Endothelial cell of umbilical vein (primary cell): ENCODE measurements at regions of chr9 and their contacts with region 1.

Region 1: DNA sequence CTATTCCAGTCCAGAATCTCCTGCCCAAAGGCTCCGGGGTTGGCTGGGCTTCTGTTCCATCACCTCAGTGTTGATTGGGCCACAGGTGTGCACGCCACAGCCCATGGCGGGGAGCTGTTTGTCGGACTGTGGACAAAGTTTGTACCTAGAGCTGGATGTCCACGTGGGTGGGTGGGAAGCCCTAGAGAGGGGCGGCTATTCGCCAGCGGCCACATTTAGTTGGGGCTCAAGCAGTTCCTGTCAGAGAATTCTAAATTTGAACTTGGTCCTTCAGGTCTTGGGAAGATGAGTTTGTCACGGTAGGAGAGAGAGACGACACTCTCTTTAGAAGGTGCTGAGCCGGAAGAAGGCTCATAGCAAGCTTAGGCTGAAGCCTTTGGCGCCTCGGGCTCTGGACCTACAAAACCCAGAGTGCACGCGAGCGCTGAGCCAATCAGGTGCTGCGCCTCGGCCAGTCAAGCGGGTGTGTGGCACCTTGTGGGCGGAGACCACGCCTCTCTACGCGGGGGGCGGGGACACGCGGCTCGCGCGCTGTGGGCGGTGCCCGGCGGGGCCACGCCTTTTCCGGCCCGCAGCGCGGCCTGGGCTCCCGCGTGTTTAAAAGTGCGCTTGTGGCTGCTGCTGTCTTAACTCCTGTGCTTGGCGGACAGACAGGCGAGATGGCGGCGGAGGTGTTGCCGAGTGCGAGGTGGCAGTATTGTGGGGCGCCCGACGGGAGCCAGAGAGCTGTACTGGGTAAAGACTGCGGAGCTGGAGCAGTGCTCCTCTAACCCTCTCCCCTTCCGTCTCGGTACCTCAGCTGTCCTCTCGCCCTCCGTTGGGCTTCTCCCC is at the start of gene POLR1E:
- DNase-seq: peak; percentile 92
- H3K4me3 ChIP-seq: peak within 1 kb of the TSS; percentile 46 to 78 (median 76)
- H3K27ac ChIP-seq: peak within 1 kb of the TSS; percentile 36
- H3K4me1 ChIP-seq: peaks cover 16% of the 10 kb centered on the region
- H3K27me3 ChIP-seq: peaks cover 3 to 6% of the 10 kb centered on the region in 2 experiments
- CTCF ChIP-seq: no peak
- POLR2A ChIP-seq: peak; percentile 94
- total RNA-seq, gene POLR1E: 17.2 and 21.2 TPM in 2 replicates

Region 2: GRCh38 chr9:37293664-37294524 is 191.7 kb before region 1 on chr9:
- CTCF ChIA-PET with region 1: no interaction called
- POLR2A ChIA-PET with region 1: no interaction called
- dilution Hi-C with region 1: no loop called
- intact Hi-C with region 1: no loop called
- DNase-seq: peak; percentile 43
- H3K4me3 ChIP-seq: no peak overlapping the region
- H3K27ac ChIP-seq: no peak overlapping the region
- H3K4me1 ChIP-seq: peaks cover 26% of the 10 kb centered on the region
- H3K27me3 ChIP-seq: no peaks in the 10 kb centered on the region
- CTCF ChIP-seq: no peak
- POLR2A ChIP-seq: no peak

Region 3: DNA sequence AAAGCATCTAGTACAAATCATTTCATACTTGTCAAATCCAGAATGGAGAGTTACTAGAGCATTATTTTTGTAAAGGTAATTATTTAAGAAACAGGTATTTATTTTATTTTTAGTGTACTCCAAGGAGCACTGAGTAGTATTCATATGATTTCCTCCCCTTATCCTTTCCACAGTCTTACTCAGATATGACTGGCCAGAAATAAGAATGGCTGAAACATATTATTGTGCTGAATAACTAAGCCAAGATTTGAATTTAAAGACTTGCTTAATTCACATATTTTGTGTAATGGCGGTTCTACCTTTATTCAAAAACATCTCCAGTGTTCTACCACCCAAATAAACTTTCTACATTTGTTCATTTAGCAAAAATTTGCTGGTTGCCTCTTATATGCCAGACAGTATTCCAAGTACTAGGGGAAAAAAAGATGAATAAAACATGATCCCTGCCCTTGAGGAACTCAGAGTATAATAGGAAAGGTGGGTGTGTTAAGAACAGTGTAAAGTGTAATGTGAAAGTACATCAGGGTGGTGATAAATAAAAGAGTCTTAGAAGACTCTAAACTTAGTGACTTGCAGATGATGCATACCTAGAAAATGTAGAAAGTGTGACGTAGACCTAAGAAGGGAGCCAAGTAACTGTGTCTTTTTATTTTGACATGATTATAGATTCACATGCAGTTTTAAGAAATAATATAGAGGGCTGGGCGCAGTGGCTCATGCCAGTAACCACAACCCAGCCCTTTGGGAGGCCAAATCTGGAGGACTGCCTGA is 173.5 kb before region 1 on chr9:
- CTCF ChIA-PET with region 1: no interaction called
- POLR2A ChIA-PET with region 1: no interaction called
- dilution Hi-C with region 1: no loop called
- intact Hi-C with region 1: no loop called
- DNase-seq: no peak
- H3K4me3 ChIP-seq: no peak overlapping the region
- H3K27ac ChIP-seq: no peak overlapping the region
- H3K4me1 ChIP-seq: no peaks in the 10 kb centered on the region
- H3K27me3 ChIP-seq: no peaks in the 10 kb centered on the region
- CTCF ChIP-seq: no peak
- POLR2A ChIP-seq: no peak

Region 4: DNA sequence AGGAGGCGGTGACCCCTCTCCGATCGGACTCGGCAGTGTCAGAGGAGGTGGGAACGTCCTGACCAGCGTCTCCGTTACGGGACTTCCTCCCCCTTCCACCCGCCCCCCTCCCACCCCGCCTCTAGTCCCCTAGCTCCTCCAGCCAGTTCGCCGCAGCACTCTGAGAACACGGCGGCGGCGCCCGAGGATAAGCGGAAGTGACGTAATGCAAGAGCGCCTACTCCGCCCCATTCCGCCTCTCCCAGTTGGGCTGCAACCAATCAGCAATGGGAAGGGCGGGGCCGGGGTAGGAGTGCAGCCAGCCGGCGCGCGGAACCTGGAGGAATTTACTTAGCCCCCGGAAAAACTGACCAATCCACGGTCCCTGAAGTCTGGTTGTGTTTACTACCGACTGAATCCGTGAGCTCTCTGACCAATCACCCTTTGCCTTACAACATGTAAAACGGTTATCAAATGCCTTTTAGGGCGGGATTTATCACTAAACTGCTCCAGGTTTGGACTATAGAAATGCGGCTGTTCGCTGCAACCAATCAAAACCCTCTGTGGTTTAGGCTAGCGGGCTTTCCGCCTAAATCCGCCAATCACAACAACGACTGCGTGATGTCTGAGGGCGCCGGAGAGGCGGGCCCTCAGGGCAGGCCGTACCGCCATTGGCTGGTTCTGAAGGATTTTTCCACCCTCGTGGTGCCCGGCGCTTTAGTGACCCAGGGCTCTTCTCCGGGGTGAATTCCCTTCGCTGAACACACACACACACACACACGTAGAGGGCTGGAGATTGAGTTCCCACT is 20.2 kb before region 1 on chr9 and contains the start of gene ZBTB5:
- CTCF ChIA-PET with region 1: interaction called, 4 read pairs
- POLR2A ChIA-PET with region 1: interaction called, 9 read pairs
- dilution Hi-C with region 1: no loop called
- intact Hi-C with region 1: loop called (anchors 1 kb)
- DNase-seq: peak; percentile 100
- H3K4me3 ChIP-seq: peak within 1 kb of the TSS; percentile 45 to 97 (median 84)
- H3K27ac ChIP-seq: peak within 1 kb of the TSS; percentile 94
- H3K4me1 ChIP-seq: peaks cover 17% of the 10 kb centered on the region
- H3K27me3 ChIP-seq: no peaks in the 10 kb centered on the region
- CTCF ChIP-seq: no peak
- POLR2A ChIP-seq: no peak
- total RNA-seq, gene ZBTB5: 9.6 and 10.0 TPM in 2 replicates

Region 5: DNA sequence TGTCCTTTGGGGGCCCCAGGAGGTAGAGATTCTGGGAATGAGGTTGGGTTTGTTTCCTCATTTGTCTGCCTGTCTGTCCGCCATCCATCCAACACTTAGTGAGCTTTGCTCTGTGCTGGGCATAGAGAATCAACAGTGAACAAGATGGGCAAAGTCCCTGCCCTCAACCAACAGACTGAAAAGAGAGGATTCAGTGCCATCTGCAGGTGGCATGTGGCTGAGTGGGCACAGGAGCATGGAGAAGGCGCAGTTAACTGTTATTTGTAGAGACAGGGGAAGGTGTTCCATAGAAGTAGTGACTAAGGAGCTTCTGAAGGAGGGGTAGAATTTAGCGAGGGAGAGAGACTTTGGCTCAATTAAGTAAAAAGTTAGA is 23.2 kb after region 1 on chr9:
- CTCF ChIA-PET with region 1: interaction called, 12 read pairs
- POLR2A ChIA-PET with region 1: no interaction called
- dilution Hi-C with region 1: no loop called
- intact Hi-C with region 1: no loop called
- DNase-seq: no peak
- H3K4me3 ChIP-seq: no peak overlapping the region
- H3K27ac ChIP-seq: no peak overlapping the region
- H3K4me1 ChIP-seq: no peaks in the 10 kb centered on the region
- H3K27me3 ChIP-seq: no peaks in the 10 kb centered on the region
- CTCF ChIP-seq: no peak
- POLR2A ChIP-seq: no peak

Region 6: GRCh38 chr9:37582548-37583157 is 97.0 kb after region 1 on chr9:
- CTCF ChIA-PET with region 1: interaction called, 8 read pairs
- POLR2A ChIA-PET with region 1: no interaction called
- dilution Hi-C with region 1: no loop called
- intact Hi-C with region 1: loop called (anchors 2 kb)
- DNase-seq: peak; percentile 75
- H3K4me3 ChIP-seq: no peak overlapping the region
- H3K27ac ChIP-seq: no peak overlapping the region
- H3K4me1 ChIP-seq: no peaks in the 10 kb centered on the region
- H3K27me3 ChIP-seq: no peaks in the 10 kb centered on the region
- CTCF ChIP-seq: peak; percentile 36 to 46
- POLR2A ChIP-seq: no peak

Region 7: GRCh38 chr9:37784616-37785483 is 299.2 kb after region 1 on chr9 and contains the start of gene EXOSC3:
- CTCF ChIA-PET with region 1: no interaction called
- POLR2A ChIA-PET with region 1: no interaction called
- dilution Hi-C with region 1: no loop called
- intact Hi-C with region 1: loop called (anchors 10 kb)
- DNase-seq: peak; percentile 91
- H3K4me3 ChIP-seq: peak within 1 kb of the TSS; percentile 42 to 80 (median 64)
- H3K27ac ChIP-seq: peak within 1 kb of the TSS; percentile 34
- H3K4me1 ChIP-seq: peaks cover 12% of the 10 kb centered on the region
- H3K27me3 ChIP-seq: no peaks in the 10 kb centered on the region
- CTCF ChIP-seq: no peak
- POLR2A ChIP-seq: peak; percentile 94
- total RNA-seq, gene EXOSC3: 38.0 and 39.1 TPM in 2 replicates

Region 8: DNA sequence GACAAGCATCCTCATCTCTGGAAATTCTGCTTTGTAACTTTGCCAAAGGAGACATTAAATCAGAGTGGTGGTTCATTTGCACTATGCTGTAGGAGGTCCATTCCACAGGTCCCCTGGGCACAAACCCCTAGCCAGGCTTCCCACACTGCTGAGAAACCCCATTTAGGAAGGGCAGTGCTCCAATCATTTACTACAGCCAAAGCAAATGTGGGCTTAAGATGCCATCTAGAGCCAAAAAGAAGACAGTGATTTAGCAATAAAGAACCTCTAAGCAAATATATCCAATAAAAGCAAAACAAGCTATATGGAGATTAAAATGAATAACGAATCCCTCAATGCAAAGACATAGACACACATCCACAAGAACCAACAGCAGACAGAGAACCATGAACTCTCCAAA is 777.9 kb after region 1 on chr9:
- CTCF ChIA-PET with region 1: interaction called, 4 read pairs
- POLR2A ChIA-PET with region 1: no interaction called
- dilution Hi-C with region 1: no loop called
- intact Hi-C with region 1: loop called (anchors 5 kb)
- DNase-seq: peak; percentile 53
- H3K4me3 ChIP-seq: no peak overlapping the region
- H3K27ac ChIP-seq: no peak overlapping the region
- H3K4me1 ChIP-seq: no peaks in the 10 kb centered on the region
- H3K27me3 ChIP-seq: peaks cover 6 to 13% of the 10 kb centered on the region in 2 experiments
- CTCF ChIP-seq: peak in 1 of 2 donors; percentile 35
- POLR2A ChIP-seq: no peak

Region 9: GRCh38 chr9:38405785-38406184 is 920.2 kb after region 1 on chr9:
- CTCF ChIA-PET with region 1: interaction called, 10 read pairs
- POLR2A ChIA-PET with region 1: no interaction called
- dilution Hi-C with region 1: no loop called
- intact Hi-C with region 1: loop called (anchors 2 kb)
- DNase-seq: no peak
- H3K4me3 ChIP-seq: no peak overlapping the region
- H3K27ac ChIP-seq: no peak overlapping the region
- H3K4me1 ChIP-seq: no peaks in the 10 kb centered on the region
- H3K27me3 ChIP-seq: peaks cover 8 to 11% of the 10 kb centered on the region in 2 experiments
- CTCF ChIP-seq: no peak
- POLR2A ChIP-seq: no peak